Activated T-helper 1 cell treated with anti-CD3 and anti-CD28 coated beads, Interleukin-12 subunit alpha, Interleukin-12 subunit beta, Interleukin-2, Interleukin-4 antibody, amounts not matched to agents 30 ng/mL and 10 ng/mL and 1 ng/mL, durations not matched to agents 14 hours and 24 hours and 36 hours (primary cell): ENCODE measurements at regions of chr14 and their contacts with region 1.

Region 1: GRCh38 chr14:22737052-22737451 is 29.4 kb upstream of the OXA1L start:
- DNase-seq: peak; percentile 43
- H3K4me3 Mint-ChIP-seq: peak overlapping the region; percentile 53
- H3K27ac Mint-ChIP-seq: peak overlapping the region; percentile 96
- H3K4me1 Mint-ChIP-seq: peaks cover 27% of the 10 kb centered on the region
- H3K27me3 Mint-ChIP-seq: peaks cover 6% of the 10 kb centered on the region

Region 2: GRCh38 chr14:22723815-22724214 is 13.2 kb before region 1 on chr14:
- intact Hi-C with region 1: loop called (anchors 2 kb)
- DNase-seq: no peak
- H3K4me3 Mint-ChIP-seq: no peak overlapping the region
- H3K27ac Mint-ChIP-seq: no peak overlapping the region
- H3K4me1 Mint-ChIP-seq: no peaks in the 10 kb centered on the region
- H3K27me3 Mint-ChIP-seq: peaks cover 15% of the 10 kb centered on the region